Caco-2 (cell line): ENCODE measurements at regions of chr7 and their contacts with region 1.

Region 1: DNA sequence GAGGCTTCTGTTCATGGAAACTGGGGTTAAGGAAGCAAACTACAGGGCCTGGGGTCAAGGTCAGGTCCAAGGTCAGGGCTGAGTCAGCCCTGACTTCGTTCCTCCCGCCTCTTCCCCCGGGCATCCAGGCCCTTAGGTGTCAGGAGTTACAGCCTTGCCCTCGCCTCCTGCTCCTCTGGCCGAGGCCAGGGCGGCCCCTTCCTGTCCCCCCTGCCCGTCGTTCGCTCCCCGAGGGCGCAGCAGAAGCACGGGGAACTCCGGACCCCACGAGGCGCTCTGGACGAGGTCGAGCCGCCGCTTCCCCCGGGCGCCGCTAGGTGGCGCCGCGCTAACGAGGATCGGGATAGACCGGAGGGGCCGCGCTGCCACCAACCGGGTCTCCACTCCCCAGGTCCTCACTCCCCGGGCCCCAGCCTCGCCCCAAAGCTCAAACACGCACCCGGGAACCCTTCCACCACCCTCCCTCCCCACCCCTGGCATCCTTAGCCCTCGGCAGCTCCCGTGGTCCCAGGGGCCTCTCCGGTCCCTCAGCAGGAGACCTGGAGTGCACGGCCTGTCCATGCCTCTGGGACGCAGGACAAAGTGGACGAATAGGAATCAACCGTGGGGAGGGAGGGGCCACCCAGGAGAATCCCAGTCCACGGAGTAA is 59.2 kb upstream of the MYL10 start:
- DNase-seq: peak; percentile 80 to 91
- H3K4me3 ChIP-seq: peak overlapping the region; percentile 42
- H3K4me3 Mint-ChIP-seq: no peak overlapping the region
- H3K27ac Mint-ChIP-seq: no peak overlapping the region
- H3K4me1 ChIP-seq: peaks cover 19% of the 10 kb centered on the region
- H3K4me1 Mint-ChIP-seq: peaks cover 13% of the 10 kb centered on the region
- H3K27me3 ChIP-seq: no peaks in the 10 kb centered on the region
- H3K27me3 Mint-ChIP-seq: no peaks in the 10 kb centered on the region
- CTCF ChIP-seq: peak; percentile 93 to 94

Region 2: DNA sequence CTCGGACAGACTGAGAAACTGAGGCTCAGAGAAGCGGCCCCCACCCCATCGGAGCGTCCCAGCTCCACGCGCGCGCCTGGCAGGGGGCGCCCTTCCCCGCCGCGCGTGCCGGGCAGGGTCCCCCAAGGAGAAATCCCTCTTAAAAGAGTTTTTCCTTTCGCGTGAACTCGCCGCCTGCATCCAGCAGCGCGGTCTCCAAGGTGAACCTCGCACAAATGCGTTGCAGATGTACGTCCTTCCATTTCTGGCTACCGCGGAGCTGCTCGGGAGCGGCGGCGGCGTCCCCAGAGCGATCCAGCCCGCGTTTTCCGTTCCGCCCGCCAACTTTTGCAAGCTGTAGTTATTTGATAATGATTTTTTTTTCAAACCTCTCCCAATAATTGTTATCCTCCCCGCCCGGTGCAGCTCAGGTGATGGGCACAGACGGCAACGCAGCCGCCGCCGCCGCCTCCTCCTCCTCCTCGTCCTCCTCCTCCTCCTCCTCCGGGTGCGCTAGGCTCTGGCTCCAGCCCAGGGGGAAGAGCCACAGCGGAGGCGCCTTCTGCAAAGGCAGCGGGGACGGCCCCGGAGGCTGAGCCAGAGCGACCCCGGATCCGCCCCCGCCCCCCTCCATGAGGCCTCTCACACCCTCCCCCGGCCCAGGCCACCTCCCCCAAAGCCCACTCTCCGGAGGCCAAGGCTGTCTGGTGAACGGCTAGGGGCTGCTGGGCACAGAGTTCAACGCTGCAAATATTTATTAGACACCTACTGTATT is 55.1 kb after region 1 on chr7:
- CTCF ChIA-PET with region 1: no interaction called
- POLR2A ChIA-PET with region 1: no interaction called
- intact Hi-C with region 1: loop called (anchors 2 kb)
- DNase-seq: peak; percentile 66 to 73
- H3K4me3 ChIP-seq: peak overlapping the region; percentile 61
- H3K4me3 Mint-ChIP-seq: peak overlapping the region; percentile 81
- H3K27ac Mint-ChIP-seq: peak overlapping the region; percentile 21
- H3K4me1 ChIP-seq: peaks cover 20% of the 10 kb centered on the region
- H3K4me1 Mint-ChIP-seq: peaks cover 11% of the 10 kb centered on the region
- H3K27me3 ChIP-seq: no peaks in the 10 kb centered on the region
- H3K27me3 Mint-ChIP-seq: no peaks in the 10 kb centered on the region
- CTCF ChIP-seq: peak; percentile 30 to 52

Region 3: GRCh38 chr7:101957744-101958525 is 269.6 kb after region 1 on chr7:
- CTCF ChIA-PET with region 1: no interaction called
- POLR2A ChIA-PET with region 1: no interaction called
- intact Hi-C with region 1: no loop called
- DNase-seq: no peak
- H3K4me3 ChIP-seq: no peak overlapping the region
- H3K4me3 Mint-ChIP-seq: no peak overlapping the region
- H3K27ac Mint-ChIP-seq: peak overlapping the region; percentile 81
- H3K4me1 ChIP-seq: peaks cover 16% of the 10 kb centered on the region
- H3K4me1 Mint-ChIP-seq: peaks cover 33% of the 10 kb centered on the region
- H3K27me3 ChIP-seq: no peaks in the 10 kb centered on the region
- H3K27me3 Mint-ChIP-seq: no peaks in the 10 kb centered on the region
- CTCF ChIP-seq: no peak

Region 4: DNA sequence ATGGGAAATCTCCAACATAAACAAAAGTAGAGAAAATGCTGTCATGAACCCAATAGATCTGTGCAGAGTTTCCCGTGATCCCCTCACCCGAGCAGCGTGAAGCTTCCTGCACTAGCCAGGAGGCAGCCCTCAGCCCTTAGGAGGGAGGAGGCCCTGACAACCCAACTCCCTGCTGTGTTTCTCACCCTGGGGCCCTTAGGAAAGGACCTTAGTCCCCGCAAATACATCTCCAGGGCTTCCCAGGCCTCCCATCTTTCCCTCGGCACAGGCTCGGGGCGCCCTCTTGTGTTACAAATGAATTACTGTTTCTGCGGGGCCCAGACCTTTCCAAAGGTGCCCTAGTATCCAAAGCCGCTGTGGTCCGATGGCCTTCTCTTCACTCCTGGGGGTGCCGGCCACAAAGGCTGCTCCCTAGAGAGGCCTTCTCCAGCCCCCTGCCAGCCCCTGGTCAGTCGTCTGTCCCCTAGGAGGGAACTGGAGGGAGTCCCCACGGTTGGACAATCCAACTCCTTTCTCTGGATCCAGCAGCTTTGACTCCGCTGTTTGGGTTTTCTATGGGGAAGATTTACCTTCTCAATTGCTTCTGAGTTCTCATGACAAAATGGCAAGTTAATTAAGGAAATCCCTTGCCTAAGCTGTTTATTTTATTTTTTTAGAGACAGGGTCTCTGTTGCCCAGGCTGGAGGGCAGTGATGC is 548.4 kb after region 1 on chr7:
- CTCF ChIA-PET with region 1: no interaction called
- POLR2A ChIA-PET with region 1: no interaction called
- intact Hi-C with region 1: loop called (anchors 1 kb)
- DNase-seq: peak; percentile 74 to 81
- H3K4me3 ChIP-seq: no peak overlapping the region
- H3K4me3 Mint-ChIP-seq: no peak overlapping the region
- H3K27ac Mint-ChIP-seq: no peak overlapping the region
- H3K4me1 ChIP-seq: no peaks in the 10 kb centered on the region; the same call in 1 of the 2 replicates
- H3K4me1 Mint-ChIP-seq: no peaks in the 10 kb centered on the region
- H3K27me3 ChIP-seq: no peaks in the 10 kb centered on the region
- H3K27me3 Mint-ChIP-seq: no peaks in the 10 kb centered on the region
- CTCF ChIP-seq: peak; percentile 82 to 88

Region 5: DNA sequence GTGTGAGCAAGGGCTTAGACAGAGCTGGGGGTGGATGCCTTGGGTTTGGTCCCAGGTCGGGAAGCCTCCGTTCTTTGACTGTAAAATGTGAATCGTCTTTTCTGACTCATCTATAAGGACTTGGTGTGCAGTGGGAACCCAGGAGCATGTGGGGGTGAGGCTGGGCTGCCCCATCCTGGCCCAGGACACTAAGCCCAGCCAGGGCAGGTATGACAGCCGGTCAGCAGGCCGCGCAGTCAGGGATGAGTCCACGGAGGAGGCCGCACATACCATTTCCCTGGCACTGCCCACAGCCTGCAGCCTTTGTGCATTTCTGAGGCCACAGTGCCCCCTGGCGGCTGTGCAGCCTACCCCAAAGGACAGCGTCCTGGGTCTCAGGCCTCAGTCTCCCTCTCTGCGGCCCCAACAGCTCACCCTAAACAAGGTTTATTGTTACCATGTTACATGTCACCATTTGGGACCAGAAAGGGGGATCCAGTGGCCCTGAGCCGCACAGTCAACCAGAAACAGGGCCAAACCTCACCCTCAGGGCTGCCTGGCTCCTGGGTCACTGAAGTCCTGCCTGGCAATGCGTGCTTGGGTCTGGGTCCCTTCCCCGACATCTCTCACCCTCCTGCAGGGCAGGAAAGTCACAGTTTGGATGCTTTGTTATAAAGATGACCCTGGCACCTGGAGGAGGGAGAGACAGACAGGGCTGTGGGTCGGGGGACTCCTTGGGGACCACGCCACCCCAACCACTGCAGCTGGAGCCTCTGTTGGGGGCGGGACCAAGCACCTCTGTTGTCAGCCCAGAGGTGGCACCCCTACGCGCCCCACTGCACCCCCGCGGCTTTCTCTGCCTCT is 584.0 kb after region 1 on chr7:
- CTCF ChIA-PET with region 1: no interaction called
- POLR2A ChIA-PET with region 1: no interaction called
- intact Hi-C with region 1: loop called (anchors 1 kb)
- DNase-seq: peak; percentile 70 to 83
- H3K4me3 ChIP-seq: no peak overlapping the region
- H3K4me3 Mint-ChIP-seq: no peak overlapping the region
- H3K27ac Mint-ChIP-seq: peak overlapping the region; percentile 42
- H3K4me1 ChIP-seq: peaks cover 10% of the 10 kb centered on the region
- H3K4me1 Mint-ChIP-seq: peaks cover 5% of the 10 kb centered on the region
- H3K27me3 ChIP-seq: no peaks in the 10 kb centered on the region
- H3K27me3 Mint-ChIP-seq: no peaks in the 10 kb centered on the region
- CTCF ChIP-seq: peak; percentile 78 to 96